Activated CD8-positive, alpha-beta memory T cell treated with anti-CD3 and anti-CD28 coated beads, Interleukin-2, amount 10 ng/mL, durations not matched to agents 7 days and 5 days (primary cell): ENCODE measurements at regions of chr12 and their contacts with region 1.

Region 1: DNA sequence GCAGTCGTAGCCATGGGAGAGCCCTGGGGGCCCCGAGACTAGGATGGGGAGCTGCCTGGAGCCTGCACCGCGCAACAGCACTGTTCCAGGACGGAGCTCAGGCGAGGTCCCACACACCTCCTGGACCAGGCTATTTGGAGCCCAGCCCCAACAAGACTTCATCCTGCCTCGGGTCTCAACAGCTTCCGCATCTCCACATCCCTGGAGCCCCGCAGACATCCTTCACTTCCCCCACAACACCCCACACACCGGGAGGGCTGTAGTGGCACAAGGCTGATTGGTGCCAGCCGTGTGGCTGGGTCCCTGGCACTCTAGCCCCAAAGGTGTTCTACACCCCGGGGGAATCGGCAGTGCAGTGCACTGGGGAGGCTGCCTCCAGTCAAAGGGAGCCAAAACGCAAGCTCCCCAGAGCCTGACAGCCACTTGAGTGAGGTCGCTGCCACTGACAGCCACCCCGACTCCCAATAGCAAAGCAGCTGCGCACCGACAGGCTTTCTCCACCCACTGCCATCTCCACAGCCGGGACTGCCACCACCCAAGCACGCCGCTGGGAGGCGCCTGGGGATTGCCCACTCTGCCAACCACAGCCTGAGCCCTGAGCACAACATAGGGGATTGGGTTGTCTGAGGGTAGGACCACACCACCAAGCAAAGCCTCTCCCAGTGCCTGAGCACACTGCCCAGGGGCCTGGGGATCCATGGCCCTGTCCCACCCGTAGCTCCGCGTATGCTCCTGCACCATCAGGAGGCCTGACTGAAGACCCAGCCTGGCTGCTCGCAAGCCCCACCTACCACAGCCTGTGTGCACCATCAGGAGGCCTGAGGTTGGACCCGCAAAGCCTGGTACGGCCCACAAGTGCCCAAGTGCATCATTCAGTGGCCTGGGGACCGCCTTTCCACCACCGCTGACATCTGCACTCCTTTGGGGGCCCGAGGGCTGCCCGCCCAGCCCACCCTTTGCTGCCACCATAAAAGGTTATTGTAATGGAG is 13.2 kb upstream of the KLRF1 start:
- DNase-seq: peak; percentile 95
- ATAC-seq: peak; percentile 98
- H3K4me3 Mint-ChIP-seq: peak overlapping the region; percentile 86
- H3K27ac Mint-ChIP-seq: peak overlapping the region; percentile 82
- H3K4me1 Mint-ChIP-seq: peaks cover 27% of the 10 kb centered on the region
- H3K27me3 Mint-ChIP-seq: peaks cover 16% of the 10 kb centered on the region

Region 2: GRCh38 chr12:9750276-9751203 is 63.6 kb before region 1 on chr12:
- CTCF ChIA-PET with region 1: interaction called, 187 read pairs
- DNase-seq: peak; percentile 71
- ATAC-seq: peak; percentile 65
- H3K4me3 Mint-ChIP-seq: peak overlapping the region; percentile 37
- H3K27ac Mint-ChIP-seq: peak overlapping the region; percentile 61
- H3K4me1 Mint-ChIP-seq: peaks cover 52% of the 10 kb centered on the region
- H3K27me3 Mint-ChIP-seq: no peaks in the 10 kb centered on the region

Region 3: DNA sequence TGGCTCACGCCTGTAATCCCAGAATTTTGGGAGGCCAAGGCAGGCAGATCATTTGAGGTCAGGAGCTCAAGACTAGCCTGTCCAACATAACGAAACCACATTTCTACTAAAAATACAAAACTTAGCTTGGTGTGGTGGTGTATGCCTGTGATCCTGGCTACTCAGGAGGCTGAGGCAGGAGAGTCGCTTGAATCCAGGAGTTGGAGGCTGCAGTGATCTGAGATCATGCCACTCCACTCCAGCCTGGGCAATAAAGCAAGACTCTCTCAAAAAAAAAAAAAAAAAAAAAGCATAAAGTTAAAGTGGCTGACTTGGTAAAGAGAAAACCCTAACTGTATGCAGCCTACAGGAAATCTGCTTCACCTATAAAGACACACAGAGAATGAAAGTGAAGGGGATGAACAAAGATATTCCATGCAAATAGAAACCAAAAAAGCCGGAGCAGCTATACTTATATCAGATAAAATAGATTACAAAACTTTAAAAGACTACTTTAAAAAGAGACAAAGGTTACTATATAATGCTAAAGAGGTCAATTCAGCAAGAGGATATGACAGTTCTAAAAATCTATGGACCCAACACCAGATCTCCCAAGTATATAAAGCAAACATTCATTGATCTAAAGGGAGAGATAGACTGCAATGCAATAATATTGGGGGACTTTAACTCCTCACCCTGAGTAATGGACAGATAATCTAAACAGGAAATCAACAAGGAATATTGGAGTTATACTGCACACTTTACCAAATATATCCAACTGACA is 51.0 kb after region 1 on chr12:
- CTCF ChIA-PET with region 1: interaction called, 11 read pairs
- DNase-seq: no peak
- ATAC-seq: peak; percentile 55
- H3K4me3 Mint-ChIP-seq: peak overlapping the region; percentile 85
- H3K27ac Mint-ChIP-seq: peak overlapping the region; percentile 90
- H3K4me1 Mint-ChIP-seq: peaks cover 32% of the 10 kb centered on the region
- H3K27me3 Mint-ChIP-seq: no peaks in the 10 kb centered on the region

Region 4: DNA sequence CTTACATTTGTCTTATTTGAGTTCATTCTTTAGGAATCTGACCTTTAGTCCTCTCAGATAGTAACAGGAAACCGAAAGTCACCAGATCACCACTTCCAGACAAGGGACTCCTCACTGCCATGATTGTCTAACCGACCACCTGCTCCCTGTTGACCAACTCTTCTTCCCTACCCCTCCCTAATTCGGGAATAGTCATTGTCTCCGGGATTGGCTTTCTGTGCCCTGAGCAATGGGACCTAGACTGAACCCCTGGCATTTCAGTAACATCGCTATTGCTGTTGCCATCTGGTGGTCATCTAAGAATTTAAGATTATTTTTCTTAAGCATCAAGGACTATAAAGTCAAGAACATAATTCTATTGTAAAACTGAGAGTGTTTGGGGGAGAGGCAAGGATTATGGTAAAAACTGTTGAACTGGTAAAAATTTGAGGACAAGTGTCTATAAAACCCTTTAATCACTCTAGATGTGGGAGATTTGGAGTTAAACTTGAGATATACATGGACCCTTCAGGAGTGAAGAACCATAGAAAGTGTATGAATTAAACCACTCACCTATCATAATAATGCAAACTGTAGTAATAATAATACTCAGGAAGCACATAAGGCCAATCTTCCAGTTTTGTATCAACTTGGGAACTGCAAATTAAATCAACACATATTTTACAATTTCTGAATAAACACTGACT is 111.7 kb after region 1 on chr12:
- CTCF ChIA-PET with region 1: interaction called, 44 read pairs
- DNase-seq: peak; percentile 45
- ATAC-seq: peak; percentile 68
- H3K4me3 Mint-ChIP-seq: peak overlapping the region; percentile 62
- H3K27ac Mint-ChIP-seq: peak overlapping the region; percentile 83
- H3K4me1 Mint-ChIP-seq: peaks cover 24% of the 10 kb centered on the region
- H3K27me3 Mint-ChIP-seq: peaks cover 9% of the 10 kb centered on the region

Region 5: GRCh38 chr12:9948606-9949296 is 134.6 kb after region 1 on chr12:
- CTCF ChIA-PET with region 1: interaction called, 21 read pairs
- DNase-seq: no peak
- ATAC-seq: peak; percentile 89
- H3K4me3 Mint-ChIP-seq: peak overlapping the region; percentile 26
- H3K27ac Mint-ChIP-seq: peak overlapping the region; percentile 79
- H3K4me1 Mint-ChIP-seq: peaks cover 50% of the 10 kb centered on the region
- H3K27me3 Mint-ChIP-seq: peaks cover 3% of the 10 kb centered on the region

Region 6: GRCh38 chr12:10140001-10140400 is 325.9 kb after region 1 on chr12:
- CTCF ChIA-PET with region 1: interaction called, 19 read pairs
- DNase-seq: peak; percentile 59
- ATAC-seq: no peak
- H3K4me3 Mint-ChIP-seq: no peak overlapping the region
- H3K27ac Mint-ChIP-seq: no peak overlapping the region
- H3K4me1 Mint-ChIP-seq: peaks cover 2% of the 10 kb centered on the region
- H3K27me3 Mint-ChIP-seq: peaks cover 22% of the 10 kb centered on the region